ENCODE measurements at regions of chr7 and their contacts with region 1.

Region 1: GRCh38 chr7:111083413-111083812 is 7.5 kb upstream of the LRRN3 start:
- DNase-seq: peak in 7 of 9 experiments; percentile 27 to 91 (median 53)
- ATAC-seq: peak; percentile 94
- H3K4me3 ChIP-seq: peak overlapping the region in 1 of 2 experiments; percentile 17
- H3K4me3 Mint-ChIP-seq: peak overlapping the region; percentile 59
- H3K27ac ChIP-seq: peak overlapping the region in 1 of 2 experiments; percentile 33
- H3K27ac Mint-ChIP-seq: peak overlapping the region; percentile 89
- H3K4me1 ChIP-seq: peaks cover 62% of the 10 kb centered on the region
- H3K4me1 Mint-ChIP-seq: peaks cover 69% of the 10 kb centered on the region
- H3K27me3 ChIP-seq: no peaks in the 10 kb centered on the region
- H3K27me3 Mint-ChIP-seq: no peaks in the 10 kb centered on the region
- CTCF ChIP-seq: no peak

Region 2: DNA sequence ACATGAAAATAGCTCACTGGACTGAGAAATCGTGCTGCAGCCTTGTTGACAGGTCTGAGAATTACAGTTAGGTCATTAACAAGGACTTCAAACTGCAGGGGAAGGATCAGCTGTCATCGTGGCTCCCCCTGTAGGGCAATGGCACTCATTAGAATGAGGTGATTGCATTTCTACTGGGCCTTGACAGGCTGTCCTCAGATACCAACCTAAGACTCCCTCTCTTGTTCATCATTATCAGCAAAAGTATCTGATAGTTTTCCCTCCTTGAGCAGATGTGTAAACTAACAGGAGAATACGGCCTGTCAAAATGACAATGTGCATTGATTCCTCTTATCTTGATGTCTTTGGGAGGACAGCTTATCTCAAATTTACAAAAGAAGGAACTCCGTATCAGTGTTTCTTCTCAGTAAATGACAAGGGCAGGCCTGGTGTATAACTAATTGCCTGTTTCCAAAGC is 641.0 kb before region 1 on chr7:
- CTCF ChIA-PET with region 1: no interaction called
- POLR2A ChIA-PET with region 1: no interaction called
- intact Hi-C with region 1: no loop called
- DNase-seq: no peak
- ATAC-seq: no peak
- H3K4me3 ChIP-seq: no peak overlapping the region
- H3K4me3 Mint-ChIP-seq: no peak overlapping the region
- H3K27ac ChIP-seq: no peak overlapping the region
- H3K27ac Mint-ChIP-seq: no peak overlapping the region
- H3K4me1 ChIP-seq: no peaks in the 10 kb centered on the region
- H3K4me1 Mint-ChIP-seq: no peaks in the 10 kb centered on the region
- H3K27me3 ChIP-seq: no peaks in the 10 kb centered on the region
- H3K27me3 Mint-ChIP-seq: no peaks in the 10 kb centered on the region
- CTCF ChIP-seq: no peak

Region 3: DNA sequence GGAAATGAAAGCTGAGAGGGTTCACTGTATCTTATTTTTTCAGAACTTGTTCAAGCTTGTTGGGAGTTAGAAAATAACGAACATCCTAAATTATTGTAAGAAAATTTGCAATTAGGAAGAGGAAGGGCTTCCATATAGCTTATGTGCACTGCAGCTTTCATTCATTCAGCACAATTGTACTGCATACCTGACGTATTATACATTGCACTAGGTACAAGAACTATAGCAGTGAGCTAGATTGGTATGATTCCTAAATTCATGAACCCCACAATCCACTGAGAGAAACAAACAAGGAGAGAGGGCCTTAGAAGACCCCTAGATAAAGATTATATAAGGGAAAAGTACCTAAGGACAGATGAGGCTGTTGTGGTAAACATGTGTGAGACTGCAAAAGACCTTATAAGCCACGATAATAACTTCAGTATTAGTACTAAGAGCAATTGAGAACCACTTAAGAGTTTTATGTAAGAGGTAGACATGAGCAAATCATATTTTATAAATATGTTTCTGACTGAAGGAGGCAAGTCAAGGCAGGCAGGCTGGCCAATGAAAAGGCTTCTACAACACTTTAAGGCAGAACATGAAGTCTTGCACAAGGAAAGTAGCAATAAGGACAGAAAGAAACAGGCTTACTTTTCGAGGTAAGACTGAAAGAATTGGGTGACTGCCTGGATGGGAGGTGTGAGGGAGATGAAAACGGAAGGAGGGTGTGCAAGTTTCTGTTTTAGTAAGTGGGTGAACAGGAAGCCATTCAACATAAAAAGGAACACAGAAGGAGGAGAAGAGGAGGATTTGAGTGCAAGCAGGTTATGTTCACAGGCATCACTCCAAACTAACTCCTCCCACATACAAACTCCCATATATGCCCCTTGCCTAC is 70.4 kb before region 1 on chr7:
- CTCF ChIA-PET with region 1: interaction called, 3 read pairs
- POLR2A ChIA-PET with region 1: interaction called, 22 read pairs
- intact Hi-C with region 1: loop called (anchors 2 to 5 kb)
- DNase-seq: peak in 7 of 9 experiments; percentile 3 to 79 (median 37)
- ATAC-seq: peak; percentile 80
- H3K4me3 ChIP-seq: peak overlapping the region; percentile 16 to 47
- H3K4me3 Mint-ChIP-seq: peak overlapping the region; percentile 74
- H3K27ac ChIP-seq: peak overlapping the region; percentile 58 to 69
- H3K27ac Mint-ChIP-seq: peak overlapping the region; percentile 89
- H3K4me1 ChIP-seq: peaks cover 84% of the 10 kb centered on the region
- H3K4me1 Mint-ChIP-seq: peaks cover 74% of the 10 kb centered on the region
- H3K27me3 ChIP-seq: no peaks in the 10 kb centered on the region
- H3K27me3 Mint-ChIP-seq: no peaks in the 10 kb centered on the region
- CTCF ChIP-seq: no peak

Region 4: DNA sequence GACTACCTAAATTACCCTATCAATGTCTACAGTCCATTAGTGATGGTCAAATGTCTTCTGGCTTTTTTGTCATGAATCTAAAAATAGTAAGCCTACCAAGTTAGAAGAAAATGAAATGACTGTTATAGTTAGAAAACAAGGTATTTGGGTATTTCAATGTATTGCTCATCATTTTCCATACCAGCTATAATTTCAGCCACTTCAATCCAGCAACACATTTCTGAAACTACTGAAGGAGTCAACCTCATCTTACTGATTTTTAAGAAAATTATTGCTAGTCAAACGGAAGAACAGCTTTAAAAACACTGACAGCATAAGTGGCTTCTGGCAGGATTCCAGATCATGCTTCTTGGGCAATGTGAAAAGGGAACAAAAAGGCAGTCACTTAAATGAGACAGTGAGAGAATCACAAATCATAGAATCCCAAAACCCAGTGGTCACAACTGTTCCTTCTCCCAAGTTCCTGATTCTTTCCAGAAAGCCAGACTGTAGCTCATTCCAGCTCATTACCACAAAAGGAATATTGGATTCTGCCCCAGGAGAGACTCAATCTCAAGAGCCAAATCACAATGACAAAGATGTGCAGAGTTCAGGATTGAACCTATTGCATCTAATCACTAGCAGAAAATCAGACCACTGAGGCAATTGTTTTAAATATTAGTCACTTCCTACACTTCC is 53.7 kb before region 1 on chr7:
- CTCF ChIA-PET with region 1: interaction called, 9 read pairs
- POLR2A ChIA-PET with region 1: interaction called, 9 read pairs
- intact Hi-C with region 1: loop called (anchors 1 to 5 kb)
- DNase-seq: peak in 5 of 9 experiments; percentile 15 to 68 (median 42)
- ATAC-seq: no peak
- H3K4me3 ChIP-seq: no peak overlapping the region
- H3K4me3 Mint-ChIP-seq: peak overlapping the region; percentile 12
- H3K27ac ChIP-seq: peak overlapping the region; percentile 0 to 12
- H3K27ac Mint-ChIP-seq: peak overlapping the region; percentile 91
- H3K4me1 ChIP-seq: peaks cover 57% of the 10 kb centered on the region
- H3K4me1 Mint-ChIP-seq: peaks cover 56% of the 10 kb centered on the region
- H3K27me3 ChIP-seq: no peaks in the 10 kb centered on the region
- H3K27me3 Mint-ChIP-seq: no peaks in the 10 kb centered on the region
- CTCF ChIP-seq: no peak

Region 5: DNA sequence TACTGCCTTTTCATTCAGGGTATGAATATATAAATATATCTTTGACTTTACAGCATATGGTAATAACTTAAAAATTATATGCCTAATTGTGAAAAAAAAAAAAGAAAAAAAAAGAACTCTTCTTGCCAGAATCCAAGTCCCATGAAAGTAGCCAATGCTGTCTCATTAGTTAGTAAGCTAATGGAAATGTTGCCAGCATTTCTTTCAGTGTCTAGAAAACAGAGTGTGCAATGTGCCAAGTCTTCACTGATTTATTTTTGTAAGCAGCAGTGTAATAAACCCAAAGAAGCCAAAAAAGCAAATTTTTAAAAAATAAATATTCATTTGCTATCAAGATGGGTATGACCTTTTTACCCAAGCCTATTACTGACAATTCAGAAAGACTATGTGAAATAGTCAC is 23.6 kb before region 1 on chr7:
- CTCF ChIA-PET with region 1: no interaction called
- POLR2A ChIA-PET with region 1: interaction called, 3 read pairs
- intact Hi-C with region 1: loop called in 1 of 2 experiments (anchors 2 kb)
- DNase-seq: no peak
- ATAC-seq: no peak
- H3K4me3 ChIP-seq: no peak overlapping the region
- H3K4me3 Mint-ChIP-seq: no peak overlapping the region
- H3K27ac ChIP-seq: no peak overlapping the region
- H3K27ac Mint-ChIP-seq: no peak overlapping the region
- H3K4me1 ChIP-seq: peaks cover 14% of the 10 kb centered on the region
- H3K4me1 Mint-ChIP-seq: peaks cover 23% of the 10 kb centered on the region
- H3K27me3 ChIP-seq: no peaks in the 10 kb centered on the region
- H3K27me3 Mint-ChIP-seq: no peaks in the 10 kb centered on the region
- CTCF ChIP-seq: no peak

Measured in CD8-positive, alpha-beta T cell (primary cell).